ENCODE measurements at regions of chr2 and their contacts with region 1.

Region 1: GRCh38 chr2:207710814-207711740 is at the start of gene CCNYL1:
- H3K4me3 ChIP-seq: peak within 1 kb of the TSS; percentile 97
- H3K27ac ChIP-seq: peak within 1 kb of the TSS; percentile 80
- H3K4me1 ChIP-seq: peaks cover 2% of the 10 kb centered on the region; the same call in 1 of the 2 replicates
- CTCF ChIP-seq: no peak

Region 2: DNA sequence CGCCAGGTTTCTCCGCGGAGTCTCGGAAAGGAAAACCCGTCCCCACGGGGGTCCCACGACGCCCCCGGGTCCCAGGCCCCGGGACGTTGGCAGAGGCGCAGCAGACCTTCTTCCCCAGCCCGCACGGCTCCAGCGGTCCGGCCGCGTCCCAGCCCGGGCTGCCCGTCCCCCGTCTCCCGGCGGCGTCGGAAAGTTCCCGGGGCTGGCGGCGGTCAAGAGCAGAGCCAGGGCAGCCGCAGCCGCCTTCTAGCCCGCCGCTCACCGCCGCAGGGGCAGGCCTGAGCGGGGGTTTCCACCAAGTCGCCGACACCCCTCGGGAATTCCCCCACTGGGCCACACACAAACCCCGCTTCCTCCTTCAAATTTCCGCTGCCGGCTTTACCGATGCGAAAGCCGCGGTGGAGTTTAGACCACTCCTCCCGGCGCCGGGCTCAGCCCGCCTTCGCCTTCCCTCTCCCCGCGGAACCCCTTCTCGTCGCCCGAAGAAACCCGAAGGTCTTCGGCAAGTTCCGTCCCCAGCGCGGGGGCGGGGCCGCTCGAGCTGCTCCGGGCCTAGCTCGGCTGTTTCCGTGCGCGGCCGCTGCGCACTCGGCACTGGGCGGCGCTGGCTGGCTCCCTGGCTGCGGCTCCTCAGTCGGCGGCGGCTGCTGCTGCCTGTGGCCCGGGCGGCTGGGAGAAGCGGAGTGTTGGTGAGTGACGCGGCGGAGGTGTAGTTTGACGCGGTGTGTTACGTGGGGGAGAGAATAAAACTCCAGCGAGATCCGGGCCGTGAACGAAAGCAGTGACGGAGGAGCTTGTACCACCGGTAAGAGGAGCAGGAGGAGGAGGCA is 181.5 kb before region 1 on chr2 and contains the start of gene CREB1:
- CTCF ChIA-PET with region 1: interaction called, 3 read pairs
- POLR2A ChIA-PET with region 1: interaction called, 20 read pairs
- H3K4me3 ChIP-seq: peak within 1 kb of the TSS; percentile 96
- H3K27ac ChIP-seq: peak within 1 kb of the TSS; percentile 95
- H3K4me1 ChIP-seq: peaks cover 3% of the 10 kb centered on the region; the same call in 1 of the 2 replicates
- CTCF ChIP-seq: no peak; the same call in 1 of the 2 replicates

Region 3: DNA sequence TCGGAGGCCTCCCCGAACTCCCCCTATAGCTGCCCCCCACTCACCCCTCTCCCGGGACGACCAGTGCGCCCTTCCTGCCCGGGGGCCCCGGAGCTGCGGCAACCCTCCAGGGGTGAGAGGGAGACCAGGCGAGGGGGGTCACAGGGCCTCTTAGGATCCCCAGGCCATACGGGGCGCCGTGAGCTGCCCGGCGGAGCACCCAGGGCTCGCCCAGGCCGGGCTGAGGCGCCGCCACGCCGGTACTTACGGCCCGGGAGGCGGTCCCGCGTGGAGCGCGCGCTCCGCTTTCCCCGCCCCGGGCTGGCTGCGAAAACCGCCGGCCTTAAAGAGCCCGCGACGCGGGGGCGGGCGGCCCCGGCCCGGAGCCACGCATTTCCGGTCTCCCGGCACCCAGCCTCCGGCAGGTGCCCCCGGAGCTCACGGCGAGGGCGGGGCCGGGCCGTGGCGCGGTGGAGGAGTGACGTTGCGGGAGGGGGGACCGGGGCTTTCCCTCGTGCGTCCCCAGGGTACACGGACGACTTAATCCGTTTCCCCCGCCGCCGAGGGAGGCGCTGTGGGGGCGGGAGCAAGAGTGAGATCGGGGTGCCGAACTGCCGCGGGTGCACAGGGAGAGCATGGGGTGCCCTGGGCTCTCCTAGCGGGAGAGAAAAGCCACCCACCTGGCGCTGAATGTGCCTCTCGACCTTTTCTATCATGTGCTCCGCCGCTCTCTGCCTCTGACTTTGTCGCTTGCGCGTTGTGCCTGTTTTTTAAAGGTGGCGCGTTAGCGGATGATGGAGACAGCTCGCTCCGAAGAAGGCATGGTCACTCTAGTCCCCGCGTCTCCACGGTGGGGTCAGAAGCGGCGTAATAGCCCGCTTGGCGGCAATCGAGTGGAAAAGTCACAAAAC is 85.8 kb before region 1 on chr2 and contains the start of gene METTL21A:
- CTCF ChIA-PET with region 1: interaction called, 5 read pairs
- POLR2A ChIA-PET with region 1: interaction called, 38 read pairs
- H3K4me3 ChIP-seq: peak within 1 kb of the TSS; percentile 81
- H3K27ac ChIP-seq: peak within 1 kb of the TSS; percentile 88
- H3K4me1 ChIP-seq: 0 out of 2 replicates have a peak, but pooled peaks cover 3% of the 10 kb centered on the region
- CTCF ChIP-seq: peak; percentile 90

Region 4: GRCh38 chr2:207683879-207684627 is 27.0 kb before region 1 on chr2:
- CTCF ChIA-PET with region 1: interaction called, 4 read pairs
- POLR2A ChIA-PET with region 1: interaction called, 16 read pairs
- H3K4me3 ChIP-seq: no peak overlapping the region
- H3K27ac ChIP-seq: peak overlapping the region; percentile 38
- H3K4me1 ChIP-seq: peaks cover 10% of the 10 kb centered on the region
- CTCF ChIP-seq: no peak

Region 5: DNA sequence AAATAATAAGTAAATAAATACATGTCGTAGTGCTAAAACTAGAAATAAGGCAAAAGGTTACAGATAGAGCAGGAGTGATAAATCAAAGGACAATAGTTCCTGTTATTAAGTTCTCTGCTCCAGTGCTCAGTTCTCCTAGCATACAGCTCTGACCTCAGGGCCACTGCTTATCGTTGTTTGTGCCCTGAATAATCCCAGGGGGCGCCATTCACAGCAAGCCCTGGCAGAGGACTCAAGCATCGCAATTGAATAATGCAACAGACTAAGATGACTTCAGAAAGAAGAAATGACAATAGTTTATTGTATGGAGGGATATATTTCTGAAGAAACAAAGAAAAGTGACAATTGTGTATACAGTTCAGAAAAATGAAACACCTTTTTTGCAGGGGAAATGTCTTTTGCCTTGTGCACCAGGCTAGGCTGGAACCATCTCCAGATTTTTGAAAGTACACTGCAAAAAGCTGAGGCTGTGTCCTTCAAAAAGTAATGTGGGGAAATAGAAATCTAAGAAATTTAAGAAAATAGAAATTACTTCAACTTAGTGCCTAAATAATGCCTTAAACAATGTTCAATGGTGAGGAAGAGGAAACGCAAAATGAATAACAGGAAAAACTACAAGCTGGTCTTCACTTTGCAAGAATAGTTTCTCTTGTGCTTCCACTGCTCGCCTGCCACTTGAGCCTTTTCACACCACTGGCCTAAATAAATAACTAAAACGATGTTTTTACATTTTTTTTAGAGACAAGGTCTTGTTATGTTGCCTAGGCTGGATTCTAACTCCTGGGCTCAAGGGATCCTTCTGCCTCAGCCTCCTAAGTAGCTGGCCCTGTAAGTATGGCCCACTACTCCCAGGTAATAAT is 18.6 kb before region 1 on chr2:
- CTCF ChIA-PET with region 1: interaction called, 50 read pairs
- POLR2A ChIA-PET with region 1: interaction called, 26 read pairs
- H3K4me3 ChIP-seq: no peak overlapping the region
- H3K27ac ChIP-seq: no peak overlapping the region
- H3K4me1 ChIP-seq: no peaks in the 10 kb centered on the region
- CTCF ChIP-seq: no peak

Region 6: GRCh38 chr2:207725873-207726578 is 14.9 kb after region 1 on chr2:
- CTCF ChIA-PET with region 1: interaction called, 6 read pairs
- POLR2A ChIA-PET with region 1: interaction called, 27 read pairs
- H3K4me3 ChIP-seq: no peak overlapping the region
- H3K27ac ChIP-seq: no peak overlapping the region
- H3K4me1 ChIP-seq: peaks cover 24% of the 10 kb centered on the region
- CTCF ChIP-seq: no peak

Measured in HEK293 (cell line).